Panc1 (cell line): ENCODE measurements at regions of chr3 and their contacts with region 1.

Region 1: GRCh38 chr3:194422188-194422587 is 23.1 kb upstream of the GP5 start:
- DNase-seq: no peak
- ATAC-seq: 0 out of 2 replicates have a peak, but pooled peaks have one; percentile 59
- H3K4me3 ChIP-seq: no peak overlapping the region
- H3K27ac ChIP-seq: no peak overlapping the region
- H3K4me1 ChIP-seq: no peaks in the 10 kb centered on the region
- H3K27me3 ChIP-seq: no peaks in the 10 kb centered on the region
- CTCF ChIP-seq: no peak

Region 2: DNA sequence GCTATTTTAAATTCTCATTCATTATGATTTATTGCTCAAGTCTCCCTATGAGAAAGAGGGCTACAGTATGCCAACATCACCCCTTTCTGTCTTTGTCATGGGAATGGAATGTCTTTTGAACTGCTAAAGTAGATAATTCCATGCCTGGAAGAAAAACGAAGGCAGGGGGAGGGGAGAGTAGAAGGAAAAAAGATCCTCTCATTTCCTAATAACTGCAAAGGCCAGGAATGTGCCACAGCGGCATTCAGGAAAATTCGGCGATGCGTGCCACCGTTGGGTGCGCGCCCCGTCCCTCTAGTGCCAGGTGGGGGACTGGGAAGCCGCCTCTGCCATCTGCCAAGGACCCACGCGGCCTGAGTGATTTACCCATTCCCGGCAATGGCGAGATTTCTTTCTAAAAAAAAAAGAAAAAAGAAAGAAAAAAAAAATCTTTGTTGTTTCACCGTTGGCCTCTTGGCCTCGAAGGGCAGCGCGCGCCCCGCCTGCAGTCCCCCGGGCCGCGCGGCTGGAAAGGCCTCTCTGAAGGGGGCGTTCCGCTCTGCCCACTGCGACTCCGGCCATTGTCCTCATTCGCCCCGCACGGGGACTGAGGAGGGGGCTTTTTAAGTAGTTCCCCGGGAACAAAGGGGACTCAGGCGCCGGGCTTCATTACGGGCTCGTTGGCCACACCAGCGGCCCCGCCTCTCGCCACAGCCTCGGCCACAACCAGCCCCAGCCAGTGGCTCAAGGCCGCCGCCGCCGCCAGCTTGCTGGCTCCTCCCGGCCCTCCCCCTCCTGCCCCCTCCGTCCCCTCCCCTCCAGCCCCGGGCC is 125.5 kb before region 1 on chr3:
- CTCF ChIA-PET with region 1: no interaction called
- POLR2A ChIA-PET with region 1: no interaction called
- in situ Hi-C with region 1: no loop called
- intact Hi-C with region 1: no loop called
- DNase-seq: no peak
- ATAC-seq: peak; percentile 62
- H3K4me3 ChIP-seq: peak overlapping the region; percentile 15 to 23; a peak in 2 of 4 replicates
- H3K27ac ChIP-seq: peak overlapping the region; percentile 25
- H3K4me1 ChIP-seq: peaks cover 7% of the 10 kb centered on the region
- H3K27me3 ChIP-seq: no peaks in the 10 kb centered on the region
- CTCF ChIP-seq: no peak

Region 3: DNA sequence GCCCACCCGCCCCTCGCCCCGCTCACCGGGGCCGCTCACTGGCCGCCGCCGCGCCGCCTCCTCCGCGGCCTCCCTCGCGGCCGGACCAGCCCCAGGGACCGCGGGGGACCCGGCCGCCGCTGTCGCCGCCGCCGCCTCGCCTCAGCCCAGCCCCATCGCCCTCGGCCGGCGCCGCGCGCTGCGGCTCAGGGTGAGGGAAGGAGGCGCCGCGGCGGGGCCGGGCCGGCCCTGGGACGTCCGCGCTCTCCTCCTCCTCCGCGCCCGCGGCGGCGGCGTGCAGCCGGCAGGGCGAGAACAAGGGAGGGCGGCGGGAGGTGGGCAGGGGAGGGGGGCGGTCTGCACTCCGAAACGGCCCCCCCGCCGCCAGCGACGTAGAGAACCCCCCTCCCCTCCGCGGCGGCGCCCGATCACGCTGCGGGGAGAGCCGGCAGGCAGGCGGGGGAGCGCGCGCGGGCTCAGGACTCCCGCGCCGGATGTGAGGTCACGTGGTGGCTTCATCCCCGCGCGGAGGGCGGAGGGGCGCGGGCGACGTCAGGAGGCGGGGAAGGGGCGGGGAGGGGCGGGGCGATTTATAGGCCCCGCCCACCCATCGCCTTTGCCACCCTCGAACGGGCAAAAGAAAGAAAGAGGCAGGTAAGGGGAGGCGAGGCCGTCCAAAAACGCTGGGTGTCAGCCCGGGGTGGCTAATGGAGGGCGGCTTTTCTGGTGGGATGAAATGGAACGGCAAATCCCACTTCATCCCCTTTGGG is 64.5 kb after region 1 on chr3 and contains the start of gene ATP13A3:
- CTCF ChIA-PET with region 1: no interaction called
- POLR2A ChIA-PET with region 1: no interaction called
- in situ Hi-C with region 1: no loop called
- intact Hi-C with region 1: loop called (anchors 10 kb)
- DNase-seq: no peak
- ATAC-seq: peak; percentile 90
- H3K4me3 ChIP-seq: peak within 1 kb of the TSS; percentile 66 to 69
- H3K27ac ChIP-seq: peak within 1 kb of the TSS; percentile 86
- H3K4me1 ChIP-seq: peaks cover 24% of the 10 kb centered on the region
- H3K27me3 ChIP-seq: no peaks in the 10 kb centered on the region
- CTCF ChIP-seq: no peak
- total RNA-seq, gene ATP13A3: 169 TPM

Region 4: DNA sequence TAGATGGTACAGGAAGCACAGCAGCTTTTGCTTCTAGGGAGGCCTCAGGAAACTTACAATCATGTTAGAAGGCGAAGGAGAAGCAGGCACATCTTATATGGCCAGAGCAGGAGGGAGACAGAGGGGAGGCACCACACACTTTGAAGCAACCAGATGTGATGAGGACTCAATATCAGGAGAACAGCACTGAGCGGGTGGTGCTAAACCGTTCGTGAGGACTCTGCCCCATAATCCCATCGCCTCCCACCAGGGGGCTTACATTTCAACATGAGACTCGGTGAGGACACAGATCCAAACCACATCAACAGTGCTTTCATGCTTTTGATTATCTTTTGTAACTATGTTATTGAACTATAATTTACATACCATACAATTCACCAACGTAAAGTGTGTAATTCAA is 218.6 kb after region 1 on chr3:
- CTCF ChIA-PET with region 1: no interaction called
- POLR2A ChIA-PET with region 1: no interaction called
- in situ Hi-C with region 1: no loop called
- intact Hi-C with region 1: no loop called
- DNase-seq: no peak
- ATAC-seq: peak; percentile 52; the same call in 1 of the 2 replicates
- H3K4me3 ChIP-seq: no peak overlapping the region
- H3K27ac ChIP-seq: no peak overlapping the region
- H3K4me1 ChIP-seq: no peaks in the 10 kb centered on the region
- H3K27me3 ChIP-seq: no peaks in the 10 kb centered on the region
- CTCF ChIP-seq: no peak; the same call in 1 of the 2 replicates